ENCODE measurements at regions of chr10 and their contacts with region 1.

Region 1: GRCh38 chr10:23047201-23048050 is 48.0 kb upstream of the MSRB2 start:
- DNase-seq: peak; percentile 63
- ATAC-seq: peak; percentile 91
- H3K4me3 ChIP-seq: no peak overlapping the region
- H3K27ac ChIP-seq: no peak overlapping the region
- H3K4me1 ChIP-seq: peaks cover 24% of the 10 kb centered on the region
- H3K27me3 ChIP-seq: no peaks in the 10 kb centered on the region
- CTCF ChIP-seq: no peak

Region 2: DNA sequence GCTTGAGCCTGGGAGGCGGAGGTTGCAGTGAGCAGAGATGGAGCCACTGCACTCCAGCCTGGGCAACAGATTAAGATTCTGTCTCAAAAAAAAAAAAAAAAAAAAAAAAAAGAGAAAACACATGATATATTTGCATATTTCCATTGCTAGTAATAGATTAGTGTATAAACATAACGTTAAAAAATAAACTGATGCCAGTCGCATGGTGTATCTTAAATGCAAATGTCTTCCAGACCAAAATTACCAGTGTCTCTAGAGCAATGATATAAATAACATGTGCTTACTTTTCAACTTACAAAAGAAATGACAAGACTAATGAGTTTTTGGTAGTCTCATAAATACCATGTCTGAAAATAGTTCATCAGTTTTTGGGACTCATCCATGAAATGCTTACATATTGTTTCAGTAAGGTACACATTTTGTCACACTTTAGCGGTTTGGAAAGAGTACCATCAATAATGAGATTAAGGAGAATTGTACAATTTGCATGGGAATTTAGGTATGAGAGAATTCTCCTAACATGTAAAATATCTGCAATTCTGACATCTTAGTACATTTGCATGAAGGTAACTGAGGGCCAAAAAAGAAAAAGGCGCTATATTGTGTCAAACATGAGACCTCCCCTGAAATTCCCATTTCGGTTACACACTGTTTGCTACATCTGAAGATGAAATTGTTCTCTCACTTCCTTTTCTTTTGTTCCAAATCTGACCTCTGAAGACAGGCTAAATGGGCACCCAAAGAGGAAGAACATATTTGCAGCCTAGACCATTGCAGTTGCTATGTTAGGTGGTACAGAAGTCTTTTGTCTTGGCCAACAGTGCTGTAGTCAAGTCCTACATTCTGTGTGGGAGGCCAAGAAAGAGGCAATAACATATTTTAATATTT is 281.5 kb before region 1 on chr10:
- CTCF ChIA-PET with region 1: no interaction called
- POLR2A ChIA-PET with region 1: no interaction called
- intact Hi-C with region 1: no loop called
- DNase-seq: no peak
- ATAC-seq: no peak
- H3K4me3 ChIP-seq: no peak overlapping the region
- H3K27ac ChIP-seq: no peak overlapping the region
- H3K4me1 ChIP-seq: no peaks in the 10 kb centered on the region
- H3K27me3 ChIP-seq: no peaks in the 10 kb centered on the region
- CTCF ChIP-seq: no peak

Region 3: GRCh38 chr10:22900841-22901601 is 146.4 kb before region 1 on chr10:
- CTCF ChIA-PET with region 1: no interaction called
- POLR2A ChIA-PET with region 1: no interaction called
- intact Hi-C with region 1: no loop called
- DNase-seq: no peak
- ATAC-seq: no peak
- H3K4me3 ChIP-seq: no peak overlapping the region
- H3K27ac ChIP-seq: no peak overlapping the region
- H3K4me1 ChIP-seq: no peaks in the 10 kb centered on the region
- H3K27me3 ChIP-seq: no peaks in the 10 kb centered on the region
- CTCF ChIP-seq: no peak

Region 4: GRCh38 chr10:23005150-23005549 is 42.3 kb before region 1 on chr10:
- CTCF ChIA-PET with region 1: no interaction called
- POLR2A ChIA-PET with region 1: no interaction called
- intact Hi-C with region 1: loop called (anchors 5 kb)
- DNase-seq: peak; percentile 61
- ATAC-seq: peak; percentile 79
- H3K4me3 ChIP-seq: peak overlapping the region; percentile 52; the same call in 1 of the 2 replicates
- H3K27ac ChIP-seq: no peak overlapping the region
- H3K4me1 ChIP-seq: no peaks in the 10 kb centered on the region
- H3K27me3 ChIP-seq: peaks cover 12% of the 10 kb centered on the region; the same call in 1 of the 2 replicates
- CTCF ChIP-seq: no peak

Region 5: DNA sequence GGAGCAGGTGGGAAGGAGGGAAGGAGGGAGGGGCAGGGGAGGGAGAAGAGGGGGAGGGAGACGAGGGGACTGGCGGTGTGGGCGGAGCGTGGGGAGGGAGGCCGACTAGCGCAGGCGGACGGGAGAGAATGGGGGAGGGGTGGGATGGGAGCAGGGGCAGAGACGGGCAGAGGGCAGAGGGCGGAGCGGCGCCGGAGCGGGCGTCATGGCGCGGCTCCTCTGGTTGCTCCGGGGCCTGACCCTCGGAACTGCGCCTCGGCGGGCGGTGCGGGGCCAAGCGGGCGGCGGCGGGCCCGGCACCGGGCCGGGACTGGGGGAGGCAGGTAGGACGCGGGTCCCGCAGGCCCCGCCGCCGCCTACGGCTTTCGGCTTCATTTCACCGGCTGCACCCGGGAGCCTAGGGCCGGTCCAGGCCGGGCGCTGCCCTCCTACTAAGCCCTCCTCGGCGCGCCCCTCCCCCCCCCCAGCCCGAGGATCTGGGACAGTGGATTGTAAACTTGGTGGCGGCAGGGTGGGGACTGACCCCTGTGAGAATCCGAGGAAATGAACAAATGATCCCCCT is 48.1 kb after region 1 on chr10 and contains the start of gene MSRB2:
- CTCF ChIA-PET with region 1: no interaction called
- POLR2A ChIA-PET with region 1: no interaction called
- intact Hi-C with region 1: no loop called
- DNase-seq: peak; percentile 81
- ATAC-seq: peak; percentile 83
- H3K4me3 ChIP-seq: peak within 1 kb of the TSS; percentile 86
- H3K27ac ChIP-seq: peak within 1 kb of the TSS; percentile 30; the same call in 1 of the 2 replicates
- H3K4me1 ChIP-seq: peaks cover 17% of the 10 kb centered on the region
- H3K27me3 ChIP-seq: no peaks in the 10 kb centered on the region
- CTCF ChIP-seq: no peak
- total RNA-seq, gene MSRB2: 14.3 and 18.8 TPM in 2 replicates

Region 6: DNA sequence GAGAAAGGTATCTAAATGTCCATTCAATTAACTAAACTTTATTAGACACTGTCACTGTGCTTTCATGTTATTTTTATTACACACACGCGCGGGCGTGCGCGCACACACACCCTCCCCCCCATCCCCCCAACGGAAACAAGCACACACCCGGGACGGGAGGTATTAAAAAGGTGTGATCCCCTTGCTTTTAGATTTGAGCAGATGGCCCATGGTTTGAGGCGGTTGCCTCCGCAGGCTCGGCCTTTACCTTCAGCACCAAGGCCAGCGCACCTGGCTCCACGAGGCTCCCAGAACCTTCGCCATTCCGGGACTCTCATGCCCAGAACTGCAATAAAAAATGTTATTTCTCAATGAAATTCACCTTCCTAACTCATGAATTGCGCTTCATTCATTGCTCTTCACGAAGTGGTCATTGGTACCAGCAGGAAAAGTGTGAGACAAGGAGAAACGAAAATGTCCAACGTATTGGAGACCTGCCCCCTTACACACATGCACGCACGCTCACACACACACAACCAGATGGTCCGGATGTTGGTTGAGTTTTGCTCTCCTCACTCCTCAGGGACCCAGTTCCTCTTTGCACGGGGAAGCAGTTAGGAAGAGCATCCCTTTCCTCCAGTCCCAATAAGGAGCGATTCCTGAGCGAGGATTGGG is 123.9 kb after region 1 on chr10:
- CTCF ChIA-PET with region 1: no interaction called
- POLR2A ChIA-PET with region 1: no interaction called
- intact Hi-C with region 1: no loop called
- DNase-seq: peak; percentile 35
- ATAC-seq: no peak
- H3K4me3 ChIP-seq: no peak overlapping the region
- H3K27ac ChIP-seq: no peak overlapping the region
- H3K4me1 ChIP-seq: no peaks in the 10 kb centered on the region
- H3K27me3 ChIP-seq: peaks cover 25% of the 10 kb centered on the region
- CTCF ChIP-seq: no peak

Measured in PC-3 (cell line).